Caco-2 (cell line): ENCODE measurements at regions of chr3 and their contacts with region 1.

Region 1: GRCh38 chr3:182683453-182683852 is 109.9 kb upstream of the ATP11B start:
- DNase-seq: peak; percentile 49 to 74
- H3K4me3 ChIP-seq: no peak overlapping the region
- H3K4me3 Mint-ChIP-seq: peak overlapping the region; percentile 74
- H3K27ac Mint-ChIP-seq: no peak overlapping the region
- H3K4me1 ChIP-seq: peaks cover 12% of the 10 kb centered on the region; the same call in 1 of the 2 replicates
- H3K4me1 Mint-ChIP-seq: peaks cover 27% of the 10 kb centered on the region
- H3K27me3 ChIP-seq: no peaks in the 10 kb centered on the region
- H3K27me3 Mint-ChIP-seq: peaks cover 3% of the 10 kb centered on the region
- CTCF ChIP-seq: peak; percentile 71 to 83

Region 2: GRCh38 chr3:181326637-181327223 is 1356.7 kb before region 1 on chr3:
- CTCF ChIA-PET with region 1: no interaction called
- POLR2A ChIA-PET with region 1: no interaction called
- intact Hi-C with region 1: loop called (anchors 1 kb)
- DNase-seq: peak in 1 of 2 experiments; percentile 32
- H3K4me3 ChIP-seq: no peak overlapping the region
- H3K4me3 Mint-ChIP-seq: no peak overlapping the region
- H3K27ac Mint-ChIP-seq: no peak overlapping the region
- H3K4me1 ChIP-seq: no peaks in the 10 kb centered on the region
- H3K4me1 Mint-ChIP-seq: no peaks in the 10 kb centered on the region
- H3K27me3 ChIP-seq: no peaks in the 10 kb centered on the region
- H3K27me3 Mint-ChIP-seq: peaks cover 31% of the 10 kb centered on the region
- CTCF ChIP-seq: peak; percentile 29 to 71

Region 3: DNA sequence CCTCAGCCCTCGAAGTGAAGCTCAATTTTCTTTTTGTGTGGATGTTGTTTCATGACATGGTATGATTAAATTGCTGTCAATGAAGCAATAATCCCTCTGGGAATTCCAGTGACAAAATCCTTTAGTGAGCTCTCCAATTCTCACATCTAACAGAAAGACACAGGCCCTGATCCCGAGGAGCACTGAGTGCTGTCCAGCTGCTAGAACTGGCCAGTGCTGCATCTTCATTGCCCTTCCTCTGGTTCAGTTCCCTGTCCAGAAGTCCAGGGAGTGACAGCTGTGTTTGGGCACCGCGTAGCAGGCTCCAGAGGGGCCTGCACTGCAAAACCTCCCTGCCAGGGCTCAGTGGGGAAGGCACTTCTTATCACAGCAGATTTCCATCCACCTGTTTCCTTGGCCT is 406.9 kb before region 1 on chr3:
- CTCF ChIA-PET with region 1: no interaction called
- POLR2A ChIA-PET with region 1: no interaction called
- intact Hi-C with region 1: loop called (anchors 5 kb)
- DNase-seq: no peak
- H3K4me3 ChIP-seq: no peak overlapping the region
- H3K4me3 Mint-ChIP-seq: no peak overlapping the region
- H3K27ac Mint-ChIP-seq: no peak overlapping the region
- H3K4me1 ChIP-seq: no peaks in the 10 kb centered on the region
- H3K4me1 Mint-ChIP-seq: no peaks in the 10 kb centered on the region
- H3K27me3 ChIP-seq: no peaks in the 10 kb centered on the region
- H3K27me3 Mint-ChIP-seq: no peaks in the 10 kb centered on the region
- CTCF ChIP-seq: no peak

Region 4: DNA sequence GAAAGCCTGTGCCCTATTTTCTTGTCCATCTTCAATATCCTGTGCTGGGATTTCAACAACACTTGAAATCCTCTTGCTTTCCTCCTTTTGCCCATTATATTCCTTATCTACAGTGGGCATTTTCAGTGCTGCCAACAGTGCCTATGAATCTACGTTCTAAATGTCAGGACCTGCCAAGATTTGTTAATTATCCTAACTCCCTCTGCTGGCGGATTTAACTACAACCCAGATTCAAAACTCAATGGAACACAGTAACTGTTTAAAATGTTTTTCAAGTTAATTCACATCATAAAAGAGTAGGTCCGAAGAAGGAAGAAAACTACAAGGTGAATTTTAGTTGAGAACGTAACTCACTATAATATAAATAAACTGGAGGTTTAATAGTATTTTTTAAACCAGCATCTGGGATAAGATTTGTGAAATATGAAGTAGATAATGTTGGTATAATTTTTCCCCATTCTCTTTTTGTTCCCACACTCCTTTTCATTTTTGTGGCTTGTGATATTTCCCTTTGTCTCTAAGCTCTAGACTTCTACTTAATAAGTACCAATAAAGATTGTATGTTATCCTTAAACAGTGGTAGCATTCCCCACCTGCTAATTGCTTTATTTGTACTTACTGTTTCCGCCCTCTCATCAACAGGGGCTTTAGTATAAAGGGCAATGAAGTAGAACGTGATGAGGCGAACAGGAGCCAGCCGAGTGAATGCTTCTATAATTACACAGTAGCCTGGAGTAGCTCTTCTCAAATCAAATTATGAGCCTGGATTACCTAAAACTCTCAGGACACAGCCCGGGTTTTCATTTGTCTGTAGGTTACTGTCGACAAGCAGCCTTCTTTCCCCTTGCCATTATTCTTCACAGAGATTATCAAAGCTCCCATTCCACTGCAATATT is 192.6 kb before region 1 on chr3:
- CTCF ChIA-PET with region 1: no interaction called
- POLR2A ChIA-PET with region 1: no interaction called
- intact Hi-C with region 1: loop called (anchors 5 kb)
- DNase-seq: peak in 1 of 2 experiments; percentile 22
- H3K4me3 ChIP-seq: no peak overlapping the region
- H3K4me3 Mint-ChIP-seq: no peak overlapping the region
- H3K27ac Mint-ChIP-seq: no peak overlapping the region
- H3K4me1 ChIP-seq: no peaks in the 10 kb centered on the region
- H3K4me1 Mint-ChIP-seq: no peaks in the 10 kb centered on the region
- H3K27me3 ChIP-seq: no peaks in the 10 kb centered on the region
- H3K27me3 Mint-ChIP-seq: no peaks in the 10 kb centered on the region
- CTCF ChIP-seq: peak; percentile 25 to 39

Region 5: DNA sequence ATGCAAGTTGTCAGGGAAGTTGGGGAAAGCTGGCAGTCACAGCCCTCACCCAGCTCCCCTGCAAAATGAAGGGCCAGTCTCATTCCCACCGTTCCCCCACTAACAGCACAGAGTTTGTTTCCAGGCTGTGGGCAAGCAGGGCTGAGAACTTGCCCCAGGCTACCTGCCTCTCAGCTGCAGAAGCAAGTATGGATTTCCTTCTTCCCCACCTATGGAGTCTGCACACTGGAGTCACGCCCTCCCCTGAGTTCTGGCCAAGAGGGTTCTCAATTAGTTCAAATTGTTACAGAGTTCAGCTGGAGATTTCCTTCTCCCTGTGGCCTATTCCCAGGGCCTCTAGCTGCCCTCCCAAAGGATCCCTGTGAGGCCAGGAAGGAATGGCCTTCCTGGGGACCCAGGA is 19.8 kb after region 1 on chr3:
- CTCF ChIA-PET with region 1: no interaction called
- POLR2A ChIA-PET with region 1: no interaction called
- intact Hi-C with region 1: no loop called
- DNase-seq: no peak
- H3K4me3 ChIP-seq: no peak overlapping the region
- H3K4me3 Mint-ChIP-seq: no peak overlapping the region
- H3K27ac Mint-ChIP-seq: no peak overlapping the region
- H3K4me1 ChIP-seq: no peaks in the 10 kb centered on the region
- H3K4me1 Mint-ChIP-seq: no peaks in the 10 kb centered on the region
- H3K27me3 ChIP-seq: no peaks in the 10 kb centered on the region
- H3K27me3 Mint-ChIP-seq: no peaks in the 10 kb centered on the region
- CTCF ChIP-seq: no peak